ENCODE measurements at regions of chr4 and their contacts with region 1.

Region 1: DNA sequence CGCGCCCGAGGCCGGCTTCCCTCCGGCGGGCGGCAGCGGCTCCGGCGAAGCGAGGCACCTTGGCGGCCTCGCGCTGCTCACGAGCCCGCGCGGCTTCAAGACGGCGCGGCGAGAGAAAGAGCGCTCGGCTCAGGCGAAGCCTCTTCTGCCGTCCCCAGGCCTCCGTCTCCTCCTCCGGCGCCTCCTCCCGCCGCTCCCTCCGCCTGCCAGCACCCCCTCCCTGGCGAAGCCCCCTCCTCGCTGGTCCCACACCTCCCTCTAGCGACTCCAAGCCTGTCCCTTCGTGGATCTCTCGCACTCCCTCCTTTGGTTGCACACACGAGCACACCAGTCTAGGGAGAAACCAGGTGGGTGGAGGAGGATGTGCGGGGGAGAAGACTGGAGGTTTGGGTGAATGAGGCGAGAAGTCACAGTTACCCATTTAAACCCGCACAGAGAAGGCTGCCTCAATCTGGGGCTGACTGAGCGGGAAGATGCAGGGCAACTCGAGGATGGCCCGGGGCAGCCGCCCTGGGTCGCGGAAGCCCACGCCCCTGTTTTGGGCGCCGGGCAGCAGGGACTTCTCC is at the start of gene CAMK2D:
- DNase-seq: peak; percentile 80
- ATAC-seq: peak; percentile 67
- H3K4me3 ChIP-seq: peak within 1 kb of the TSS; percentile 79 to 88
- H3K27ac ChIP-seq: peak within 1 kb of the TSS; percentile 95
- H3K4me1 ChIP-seq: peaks cover 15 to 25% of the 10 kb centered on the region in 2 experiments
- H3K27me3 ChIP-seq: no peaks in the 10 kb centered on the region
- CTCF ChIP-seq: peak; percentile 39 to 94 (median 56)
- POLR2A ChIP-seq: no peak
- RAD21 ChIP-seq: peak; percentile 94
- total RNA-seq, gene CAMK2D: 67.0 TPM

Region 2: GRCh38 chr4:113292371-113293042 is 469.2 kb before region 1 on chr4:
- CTCF ChIA-PET with region 1: no interaction called
- POLR2A ChIA-PET with region 1: no interaction called
- RAD21 ChIA-PET with region 1: no interaction called
- intact Hi-C with region 1: loop called (anchors 10 kb)
- DNase-seq: no peak
- ATAC-seq: no peak
- H3K4me3 ChIP-seq: no peak overlapping the region
- H3K27ac ChIP-seq: no peak overlapping the region
- H3K4me1 ChIP-seq: no peaks in the 10 kb centered on the region
- H3K27me3 ChIP-seq: no peaks in the 10 kb centered on the region
- CTCF ChIP-seq: no peak
- POLR2A ChIP-seq: no peak
- RAD21 ChIP-seq: no peak

Region 3: GRCh38 chr4:113445286-113445685 is 316.4 kb before region 1 on chr4:
- CTCF ChIA-PET with region 1: no interaction called
- POLR2A ChIA-PET with region 1: no interaction called
- RAD21 ChIA-PET with region 1: no interaction called
- intact Hi-C with region 1: loop called (anchors 5 kb)
- DNase-seq: no peak
- ATAC-seq: peak; percentile 13; the same call in 1 of the 2 replicates
- H3K4me3 ChIP-seq: 0 out of 4 replicates have a peak overlapping the region, but pooled peaks of 1 of the 2 experiments have one; percentile 21
- H3K27ac ChIP-seq: peak overlapping the region; percentile 88
- H3K4me1 ChIP-seq: peaks cover 53 to 66% of the 10 kb centered on the region in 2 experiments
- H3K27me3 ChIP-seq: no peaks in the 10 kb centered on the region
- CTCF ChIP-seq: no peak
- POLR2A ChIP-seq: no peak
- RAD21 ChIP-seq: no peak

Region 4: GRCh38 chr4:113468165-113469022 is 293.3 kb before region 1 on chr4:
- CTCF ChIA-PET with region 1: no interaction called
- POLR2A ChIA-PET with region 1: interaction called, 3 read pairs
- RAD21 ChIA-PET with region 1: no interaction called
- intact Hi-C with region 1: loop called (anchors 5 kb)
- DNase-seq: peak; percentile 98
- ATAC-seq: peak; percentile 90
- H3K4me3 ChIP-seq: peak overlapping the region; percentile 4 to 35; a peak in 3 of 4 replicates
- H3K27ac ChIP-seq: peak overlapping the region; percentile 77
- H3K4me1 ChIP-seq: peaks cover 51 to 70% of the 10 kb centered on the region in 2 experiments
- H3K27me3 ChIP-seq: no peaks in the 10 kb centered on the region
- CTCF ChIP-seq: no peak
- POLR2A ChIP-seq: no peak
- RAD21 ChIP-seq: peak; percentile 52

Region 5: DNA sequence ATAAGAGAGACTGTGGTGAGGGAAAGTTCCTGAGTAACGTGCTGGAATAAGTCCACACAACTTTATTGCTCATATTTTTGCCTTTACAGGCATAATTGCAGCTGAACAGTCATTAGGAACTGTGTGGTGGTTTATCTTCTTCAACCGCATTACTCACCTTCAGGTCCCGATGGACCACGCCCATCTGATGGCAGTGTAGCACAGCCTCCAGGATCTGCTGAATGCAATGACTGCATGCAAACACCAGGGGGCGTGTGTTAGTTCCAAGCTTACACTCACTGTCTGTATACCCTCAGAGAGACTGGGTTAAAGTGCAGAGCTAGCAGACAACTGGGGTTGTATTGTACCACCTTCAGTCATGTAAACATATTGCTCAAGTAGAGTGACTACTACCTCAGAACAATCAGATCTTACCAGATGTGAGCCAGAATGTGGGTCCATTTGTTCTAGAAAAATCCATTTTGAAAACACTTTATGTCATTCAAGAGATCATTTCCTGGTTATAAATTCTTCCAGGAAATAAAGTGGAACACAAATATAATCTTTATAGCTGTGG is 214.1 kb before region 1 on chr4:
- CTCF ChIA-PET with region 1: interaction called, 6 read pairs
- POLR2A ChIA-PET with region 1: no interaction called
- RAD21 ChIA-PET with region 1: no interaction called
- intact Hi-C with region 1: loop called (anchors 1 kb)
- DNase-seq: peak; percentile 95
- ATAC-seq: peak; percentile 100
- H3K4me3 ChIP-seq: no peak overlapping the region
- H3K27ac ChIP-seq: no peak overlapping the region
- H3K4me1 ChIP-seq: peaks cover 6 to 13% of the 10 kb centered on the region in 2 experiments; a peak in 3 of 4 replicates
- H3K27me3 ChIP-seq: no peaks in the 10 kb centered on the region
- CTCF ChIP-seq: peak; percentile 81 to 98 (median 96)
- POLR2A ChIP-seq: no peak
- RAD21 ChIP-seq: peak; percentile 85

Region 6: GRCh38 chr4:113837397-113837796 is 75.7 kb after region 1 on chr4:
- CTCF ChIA-PET with region 1: no interaction called
- POLR2A ChIA-PET with region 1: no interaction called
- RAD21 ChIA-PET with region 1: no interaction called
- intact Hi-C with region 1: no loop called
- DNase-seq: no peak
- ATAC-seq: no peak
- H3K4me3 ChIP-seq: no peak overlapping the region
- H3K27ac ChIP-seq: no peak overlapping the region
- H3K4me1 ChIP-seq: peaks cover 0 to 7% of the 10 kb centered on the region in 2 experiments; a peak in 2 of 4 replicates
- H3K27me3 ChIP-seq: no peaks in the 10 kb centered on the region
- CTCF ChIP-seq: no peak
- POLR2A ChIP-seq: no peak
- RAD21 ChIP-seq: no peak

Region 7: DNA sequence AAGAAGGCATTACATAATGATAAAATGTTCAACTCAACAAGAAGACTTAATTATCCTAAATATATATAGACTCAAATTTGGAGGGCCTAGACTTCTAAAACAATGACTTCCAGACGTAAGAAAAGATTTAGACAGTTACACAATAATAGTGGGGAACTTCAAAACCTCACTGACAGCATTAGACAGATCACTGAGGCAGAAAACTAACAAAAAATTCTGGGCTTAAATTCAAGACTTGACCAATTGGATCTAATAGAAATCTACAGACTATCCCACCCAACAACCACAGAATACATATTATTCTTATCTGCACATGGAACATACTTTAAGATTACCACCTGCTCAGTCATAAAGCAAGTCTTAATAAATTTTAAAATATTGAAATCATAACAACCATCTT is 311.1 kb after region 1 on chr4:
- CTCF ChIA-PET with region 1: no interaction called
- POLR2A ChIA-PET with region 1: no interaction called
- RAD21 ChIA-PET with region 1: no interaction called
- intact Hi-C with region 1: loop called (anchors 5 kb)
- DNase-seq: no peak
- ATAC-seq: no peak
- H3K4me3 ChIP-seq: no peak overlapping the region
- H3K27ac ChIP-seq: no peak overlapping the region
- H3K4me1 ChIP-seq: peaks cover 0 to 8% of the 10 kb centered on the region in 2 experiments; a peak in 2 of 4 replicates
- H3K27me3 ChIP-seq: no peaks in the 10 kb centered on the region
- CTCF ChIP-seq: no peak
- POLR2A ChIP-seq: no peak
- RAD21 ChIP-seq: no peak

Measured in HCT116 (cell line).